BJ (cell line): ENCODE measurements at regions of chr9 and their contacts with region 1.

Region 1: GRCh38 chr9:92140074-92140753 is 25.0 kb upstream of the SPTLC1 start:
- DNase-seq: no peak
- H3K4me3 ChIP-seq: no peak overlapping the region
- H3K27me3 ChIP-seq: peaks cover 1% of the 10 kb centered on the region; the same call in 1 of the 2 replicates
- CTCF ChIP-seq: peak; percentile 96

Region 2: GRCh38 chr9:92119586-92119985 is 20.6 kb before region 1 on chr9:
- CTCF ChIA-PET with region 1: interaction called, 22 read pairs
- POLR2A ChIA-PET with region 1: no interaction called
- DNase-seq: no peak
- H3K4me3 ChIP-seq: no peak overlapping the region
- H3K27me3 ChIP-seq: no peaks in the 10 kb centered on the region; the same call in 1 of the 2 replicates
- CTCF ChIP-seq: no peak

Region 3: GRCh38 chr9:92223758-92224157 is 83.5 kb after region 1 on chr9:
- CTCF ChIA-PET with region 1: interaction called, 45 read pairs
- POLR2A ChIA-PET with region 1: no interaction called
- DNase-seq: no peak
- H3K4me3 ChIP-seq: no peak overlapping the region
- H3K27me3 ChIP-seq: no peaks in the 10 kb centered on the region
- CTCF ChIP-seq: no peak

Region 4: GRCh38 chr9:92265159-92265558 is 124.9 kb after region 1 on chr9:
- CTCF ChIA-PET with region 1: interaction called, 28 read pairs
- POLR2A ChIA-PET with region 1: no interaction called
- DNase-seq: peak; percentile 19
- H3K4me3 ChIP-seq: no peak overlapping the region
- H3K27me3 ChIP-seq: no peaks in the 10 kb centered on the region
- CTCF ChIP-seq: no peak

Region 5: DNA sequence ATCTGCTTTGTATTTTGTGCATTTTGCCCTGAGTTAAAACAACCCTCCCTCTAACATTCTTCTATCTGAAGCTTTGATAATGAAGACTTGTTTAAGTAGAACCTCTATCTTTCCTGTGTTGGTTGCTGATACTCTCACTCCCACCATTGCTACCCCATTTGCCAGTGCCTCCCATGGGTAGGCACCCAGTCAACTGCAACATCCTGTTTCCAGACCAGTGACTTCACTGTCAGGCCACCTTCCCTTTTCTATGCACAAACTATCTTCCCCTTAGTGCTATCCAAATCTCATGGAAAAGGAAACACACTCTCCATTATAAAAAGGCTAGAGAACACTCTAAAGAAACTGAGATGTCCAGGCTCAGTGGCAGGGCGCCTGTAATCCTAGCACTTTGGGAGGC is 158.9 kb after region 1 on chr9:
- CTCF ChIA-PET with region 1: interaction called, 22 read pairs
- POLR2A ChIA-PET with region 1: no interaction called
- DNase-seq: no peak
- H3K4me3 ChIP-seq: no peak overlapping the region
- H3K27me3 ChIP-seq: no peaks in the 10 kb centered on the region
- CTCF ChIP-seq: no peak

Region 6: GRCh38 chr9:92790542-92791527 is 650.6 kb after region 1 on chr9:
- CTCF ChIA-PET with region 1: interaction called, 10 read pairs
- POLR2A ChIA-PET with region 1: no interaction called
- DNase-seq: no peak
- H3K4me3 ChIP-seq: no peak overlapping the region
- H3K27me3 ChIP-seq: peaks cover 12% of the 10 kb centered on the region
- CTCF ChIP-seq: peak; percentile 77